ENCODE measurements at regions of chr3 and their contacts with region 1.

Region 1: DNA sequence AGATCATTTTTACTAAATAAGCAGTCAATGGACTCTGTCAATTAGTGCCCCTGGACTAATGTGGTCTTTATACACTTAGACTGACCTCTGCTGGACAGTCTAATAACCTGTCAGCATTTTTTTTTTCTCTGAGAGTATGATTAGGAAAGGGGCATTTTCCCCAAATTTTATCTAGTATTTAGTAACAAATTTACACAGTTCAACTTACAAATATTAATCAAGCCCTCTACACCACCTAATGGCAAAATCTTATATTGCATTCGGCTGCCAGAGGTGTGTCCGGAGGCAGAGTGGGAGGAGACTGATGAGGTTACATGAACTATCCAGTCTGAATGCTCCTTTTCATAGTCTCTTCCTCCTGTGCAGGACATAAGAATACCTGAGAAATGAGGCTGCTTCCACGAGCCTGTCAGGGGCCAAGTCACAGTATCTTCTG is 36.0 kb upstream of the COLQ start:
- DNase-seq: peak; percentile 77
- H3K4me3 ChIP-seq: no peak overlapping the region
- H3K27ac ChIP-seq: no peak overlapping the region
- H3K4me1 ChIP-seq: no peaks in the 10 kb centered on the region
- H3K27me3 ChIP-seq: no peaks in the 10 kb centered on the region
- CTCF ChIP-seq: peak; percentile 29 to 40

Region 2: DNA sequence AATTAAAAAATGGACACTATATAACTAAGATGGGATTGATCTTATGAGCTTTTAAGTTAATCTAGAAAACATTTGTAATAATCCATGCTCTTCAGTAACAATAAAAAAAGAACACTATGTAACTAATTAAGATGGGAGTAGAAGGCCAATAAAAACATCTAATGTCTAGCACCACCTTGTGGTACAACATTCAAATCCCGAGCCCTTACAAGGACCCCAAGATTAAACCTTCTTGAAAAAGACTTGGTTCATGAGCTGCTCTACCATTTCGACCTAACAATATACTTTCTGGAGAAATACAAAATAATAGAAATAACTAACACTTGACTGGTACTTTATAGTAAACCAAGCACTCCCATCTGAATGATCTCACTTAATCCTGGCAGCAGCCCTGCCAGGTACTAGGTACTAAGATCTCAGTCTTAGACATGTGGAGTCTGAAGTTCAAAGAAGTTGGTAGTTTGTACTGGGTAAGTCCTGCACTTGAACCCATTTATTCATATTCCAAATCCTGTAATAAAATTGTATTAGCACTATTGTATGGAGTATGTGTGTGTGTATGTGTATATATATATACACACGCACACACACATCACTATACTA is 152.0 kb before region 1 on chr3:
- CTCF ChIA-PET with region 1: no interaction called
- dilution Hi-C with region 1: no loop called
- in situ Hi-C with region 1: no loop called
- intact Hi-C with region 1: loop called (anchors 1 kb)
- DNase-seq: peak; percentile 38
- H3K4me3 ChIP-seq: no peak overlapping the region
- H3K27ac ChIP-seq: no peak overlapping the region
- H3K4me1 ChIP-seq: no peaks in the 10 kb centered on the region
- H3K27me3 ChIP-seq: no peaks in the 10 kb centered on the region
- CTCF ChIP-seq: peak; percentile 58 to 61

Region 3: DNA sequence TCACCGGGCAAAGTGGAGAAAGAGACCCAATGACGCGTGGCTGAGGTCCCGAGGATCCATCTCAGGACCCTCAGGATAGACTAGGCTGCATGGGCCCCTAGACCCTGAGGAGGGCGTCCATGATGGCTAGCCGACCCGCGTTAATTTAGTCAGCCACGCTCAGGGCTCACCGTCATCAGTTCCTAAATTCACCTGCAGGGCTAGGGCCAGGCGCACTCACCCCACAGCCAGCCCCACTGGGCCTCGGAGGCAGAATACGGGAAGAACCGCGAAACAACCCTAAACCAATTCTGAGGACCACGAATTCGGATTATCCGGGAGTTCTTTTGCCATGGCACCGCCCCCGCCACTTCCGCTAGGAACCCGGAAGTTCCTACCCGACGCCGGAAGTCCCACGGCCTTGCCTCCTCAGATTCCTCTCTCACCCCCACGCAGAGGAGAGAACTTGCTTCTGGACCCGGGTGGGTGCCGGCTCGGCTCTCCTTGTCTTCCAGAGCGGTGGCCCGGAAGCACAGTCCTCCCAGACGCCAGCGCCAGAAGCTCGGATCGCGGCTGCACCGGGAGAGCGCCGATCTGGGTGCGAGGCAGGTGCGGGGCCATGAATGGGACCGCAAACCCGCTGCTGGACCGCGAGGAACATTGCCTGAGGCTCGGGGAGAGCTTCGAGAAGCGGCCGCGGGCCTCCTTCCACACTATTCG is 130.2 kb before region 1 on chr3 and contains the starts of genes EAF1 and METTL6:
- CTCF ChIA-PET with region 1: no interaction called
- dilution Hi-C with region 1: no loop called
- in situ Hi-C with region 1: no loop called
- intact Hi-C with region 1: loop called (anchors 1 kb)
- DNase-seq: peak; percentile 73
- H3K4me3 ChIP-seq: peak within 1 kb of the TSS; percentile 60 to 89 (median 77)
- H3K27ac ChIP-seq: peak within 1 kb of the TSS; percentile 87
- H3K4me1 ChIP-seq: peaks cover 16% of the 10 kb centered on the region
- H3K27me3 ChIP-seq: no peaks in the 10 kb centered on the region
- CTCF ChIP-seq: peak; percentile 4 to 22
- total RNA-seq, gene EAF1: 23.4 to 40.3 TPM
- total RNA-seq, gene METTL6: 19.7 to 21.5 TPM

Measured in mammary epithelial cell (primary cell).